Caco-2 (cell line): ENCODE measurements at regions of chr15 and their contacts with region 1.

Region 1: DNA sequence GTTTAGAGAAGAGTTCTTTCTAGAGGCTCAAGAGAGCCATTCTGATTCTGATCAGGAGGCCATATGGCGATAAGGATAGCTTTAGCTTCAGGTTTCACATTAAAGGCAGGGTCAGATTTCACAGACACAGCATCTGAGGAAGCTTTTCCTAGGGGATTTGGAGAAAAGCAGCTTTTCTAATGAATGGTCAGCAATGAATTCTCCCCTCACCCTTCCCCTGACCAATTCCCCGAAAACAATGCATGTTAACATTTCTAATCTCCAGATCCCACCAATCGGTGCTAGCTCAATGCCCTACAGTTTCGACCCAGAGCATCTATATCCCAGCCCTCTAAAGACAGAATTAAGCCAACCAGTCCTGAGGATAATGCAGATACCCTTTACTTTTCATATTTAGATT is 9.8 kb downstream of the AGBL1 start:
- DNase-seq: no peak
- H3K4me3 ChIP-seq: no peak overlapping the region
- H3K4me3 Mint-ChIP-seq: no peak overlapping the region
- H3K27ac Mint-ChIP-seq: no peak overlapping the region
- H3K4me1 ChIP-seq: no peaks in the 10 kb centered on the region
- H3K4me1 Mint-ChIP-seq: no peaks in the 10 kb centered on the region
- H3K27me3 ChIP-seq: no peaks in the 10 kb centered on the region
- H3K27me3 Mint-ChIP-seq: peaks cover 23% of the 10 kb centered on the region
- CTCF ChIP-seq: no peak

Region 2: DNA sequence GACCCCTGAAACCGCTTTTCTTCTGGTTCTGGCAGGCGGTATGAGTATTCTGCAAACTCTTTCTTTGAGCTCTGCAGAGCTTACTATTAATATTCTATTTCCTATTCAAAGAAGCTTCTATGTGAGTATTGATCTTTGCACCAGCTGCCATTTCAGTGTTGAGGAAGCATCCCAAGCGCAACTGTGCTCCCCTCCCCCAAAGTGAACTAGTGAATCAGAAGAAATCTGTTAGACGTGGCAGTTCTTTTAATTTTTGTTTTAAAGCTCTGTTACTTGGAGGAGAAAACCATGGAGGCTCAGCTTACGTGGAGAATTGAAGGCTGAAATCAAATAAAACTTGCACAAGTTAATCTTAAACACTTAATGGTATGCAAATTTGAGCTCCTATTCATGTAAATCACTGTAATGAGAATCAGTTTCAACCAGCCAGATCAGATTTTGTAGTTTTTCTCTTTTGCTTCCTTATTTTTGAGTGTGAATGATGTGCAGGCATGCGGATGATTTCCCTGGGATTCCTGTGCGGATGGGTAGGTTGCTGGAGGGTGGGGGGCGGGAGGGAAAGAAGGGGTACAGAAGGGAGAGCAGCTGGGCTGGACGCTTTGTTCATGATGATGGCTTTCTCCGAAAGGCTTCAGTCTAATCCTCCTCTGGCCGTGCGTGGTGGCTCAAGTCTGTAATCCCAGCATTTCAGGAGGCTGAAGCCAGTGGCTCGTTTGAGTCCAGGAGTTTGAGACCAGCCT is 25.9 kb before region 1 on chr15:
- CTCF ChIA-PET with region 1: no interaction called
- POLR2A ChIA-PET with region 1: no interaction called
- intact Hi-C with region 1: loop called (anchors 1 kb)
- DNase-seq: no peak
- H3K4me3 ChIP-seq: no peak overlapping the region
- H3K4me3 Mint-ChIP-seq: no peak overlapping the region
- H3K27ac Mint-ChIP-seq: no peak overlapping the region
- H3K4me1 ChIP-seq: no peaks in the 10 kb centered on the region
- H3K4me1 Mint-ChIP-seq: no peaks in the 10 kb centered on the region
- H3K27me3 ChIP-seq: no peaks in the 10 kb centered on the region
- H3K27me3 Mint-ChIP-seq: peaks cover 15% of the 10 kb centered on the region
- CTCF ChIP-seq: no peak

Region 3: DNA sequence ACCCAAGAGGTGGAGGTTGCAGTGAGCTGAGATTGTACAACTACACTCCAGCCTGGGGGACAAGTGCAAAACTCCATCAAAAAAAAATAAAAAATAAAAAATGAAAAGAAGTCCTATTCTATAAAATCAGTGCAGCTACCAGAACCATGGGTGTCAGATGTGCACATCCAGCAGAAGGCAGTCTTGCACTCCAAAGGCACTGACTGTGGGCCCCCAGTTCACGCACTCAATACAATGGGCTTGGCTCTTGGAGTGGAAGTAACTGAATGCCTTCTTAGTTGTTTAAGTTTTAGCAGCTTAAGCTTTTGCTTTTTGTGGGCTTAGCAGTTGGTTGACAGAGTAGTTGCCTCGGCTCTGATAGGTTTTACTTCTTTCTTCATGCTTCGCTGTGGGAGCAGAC is 131.7 kb after region 1 on chr15:
- CTCF ChIA-PET with region 1: no interaction called
- POLR2A ChIA-PET with region 1: no interaction called
- intact Hi-C with region 1: no loop called
- DNase-seq: no peak
- H3K4me3 ChIP-seq: no peak overlapping the region
- H3K4me3 Mint-ChIP-seq: no peak overlapping the region
- H3K27ac Mint-ChIP-seq: no peak overlapping the region
- H3K4me1 ChIP-seq: no peaks in the 10 kb centered on the region
- H3K4me1 Mint-ChIP-seq: no peaks in the 10 kb centered on the region
- H3K27me3 ChIP-seq: no peaks in the 10 kb centered on the region
- H3K27me3 Mint-ChIP-seq: peaks cover 6% of the 10 kb centered on the region
- CTCF ChIP-seq: no peak